ENCODE measurements at regions of chr4 and their contacts with region 1.

Region 1: GRCh38 chr4:98260579-98261290 is 449 bp upstream of the RAP1GDS1 start:
- DNase-seq: peak; percentile 90
- ATAC-seq: peak; percentile 87
- H3K4me3 ChIP-seq: peak overlapping the region; percentile 93
- H3K27ac ChIP-seq: peak overlapping the region; percentile 85
- H3K4me1 ChIP-seq: peaks cover 22% of the 10 kb centered on the region
- H3K27me3 ChIP-seq: no peaks in the 10 kb centered on the region
- CTCF ChIP-seq: no peak

Region 2: GRCh38 chr4:98150092-98150761 is 110.5 kb before region 1 on chr4:
- CTCF ChIA-PET with region 1: no interaction called
- POLR2A ChIA-PET with region 1: no interaction called
- intact Hi-C with region 1: loop called (anchors 2 kb)
- DNase-seq: peak; percentile 18
- ATAC-seq: no peak
- H3K4me3 ChIP-seq: no peak overlapping the region
- H3K27ac ChIP-seq: no peak overlapping the region
- H3K4me1 ChIP-seq: peaks cover 24% of the 10 kb centered on the region
- H3K27me3 ChIP-seq: no peaks in the 10 kb centered on the region
- CTCF ChIP-seq: peak; percentile 50

Region 3: DNA sequence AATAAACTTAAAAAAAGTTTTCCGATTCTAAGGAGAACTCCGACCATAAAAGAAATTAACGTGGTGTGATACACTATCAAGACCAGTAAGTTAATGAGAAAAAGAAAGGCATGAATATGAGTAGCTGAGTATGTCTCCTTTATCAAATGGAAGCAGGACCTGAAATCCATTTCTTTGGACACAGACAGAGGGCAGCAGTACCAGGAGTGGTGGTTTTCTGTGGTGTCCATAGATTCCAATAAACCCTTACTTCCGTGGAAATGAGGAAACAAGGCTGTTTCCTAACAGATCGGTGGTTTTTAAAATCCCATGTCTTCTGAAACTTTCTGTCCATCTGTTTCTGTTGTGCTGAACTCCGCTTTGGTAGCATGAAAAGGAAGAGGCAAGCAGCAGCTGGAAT is 526.1 kb after region 1 on chr4:
- CTCF ChIA-PET with region 1: no interaction called
- POLR2A ChIA-PET with region 1: no interaction called
- intact Hi-C with region 1: no loop called
- DNase-seq: no peak
- ATAC-seq: no peak
- H3K4me3 ChIP-seq: no peak overlapping the region
- H3K27ac ChIP-seq: no peak overlapping the region
- H3K4me1 ChIP-seq: no peaks in the 10 kb centered on the region
- H3K27me3 ChIP-seq: no peaks in the 10 kb centered on the region
- CTCF ChIP-seq: 0 out of 2 replicates have a peak, but pooled peaks have one; percentile 28

Region 4: GRCh38 chr4:99079625-99080295 is 819.0 kb after region 1 on chr4:
- CTCF ChIA-PET with region 1: no interaction called
- POLR2A ChIA-PET with region 1: no interaction called
- intact Hi-C with region 1: loop called (anchors 5 kb)
- DNase-seq: peak; percentile 4
- ATAC-seq: peak; percentile 95
- H3K4me3 ChIP-seq: no peak overlapping the region
- H3K27ac ChIP-seq: peak overlapping the region; percentile 58
- H3K4me1 ChIP-seq: peaks cover 5% of the 10 kb centered on the region; the same call in 1 of the 2 replicates
- H3K27me3 ChIP-seq: no peaks in the 10 kb centered on the region
- CTCF ChIP-seq: no peak